Activated T-helper 2 cell treated with anti-CD3 and anti-CD28 coated beads, Interferon-gamma antibody, Interleukin-2, Interleukin-4, amounts not matched to agents 10 μg/mL and 5 μg/mL and 100 μg/mL, durations not matched to agents 14 hours and 24 hours and 36 hours (primary cell): ENCODE measurements at regions of chr2 and their contacts with region 1.

Region 1: DNA sequence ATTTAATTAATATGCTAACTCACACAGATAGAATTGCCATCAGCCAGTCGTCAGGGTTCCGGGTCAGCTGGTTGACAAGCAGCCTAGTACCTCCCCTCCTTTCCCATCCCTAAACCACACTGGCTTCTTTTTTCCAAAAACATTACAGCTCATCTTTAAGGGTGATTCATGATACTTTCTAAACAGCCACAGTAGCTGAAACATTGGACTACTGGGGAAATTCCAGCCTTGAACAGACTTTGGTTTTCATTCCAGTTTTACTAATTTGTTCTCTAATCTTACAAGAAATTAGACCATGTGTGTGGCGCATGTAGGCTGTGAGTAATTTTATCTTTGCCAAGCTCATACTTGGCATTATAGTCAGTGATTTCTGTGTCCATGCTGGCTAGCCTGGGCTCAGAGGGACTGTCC is 110.8 kb downstream of the FMNL2 start:
- DNase-seq: no peak
- H3K4me3 Mint-ChIP-seq: no peak overlapping the region
- H3K27ac Mint-ChIP-seq: no peak overlapping the region
- H3K4me1 Mint-ChIP-seq: peaks cover 22% of the 10 kb centered on the region
- H3K27me3 Mint-ChIP-seq: peaks cover 3% of the 10 kb centered on the region

Region 2: GRCh38 chr2:152415231-152415642 is 30.6 kb before region 1 on chr2:
- intact Hi-C with region 1: loop called (anchors 1 kb)
- DNase-seq: no peak
- H3K4me3 Mint-ChIP-seq: peak overlapping the region; percentile 8
- H3K27ac Mint-ChIP-seq: peak overlapping the region; percentile 88
- H3K4me1 Mint-ChIP-seq: peaks cover 53% of the 10 kb centered on the region
- H3K27me3 Mint-ChIP-seq: peaks cover 2% of the 10 kb centered on the region

Region 3: DNA sequence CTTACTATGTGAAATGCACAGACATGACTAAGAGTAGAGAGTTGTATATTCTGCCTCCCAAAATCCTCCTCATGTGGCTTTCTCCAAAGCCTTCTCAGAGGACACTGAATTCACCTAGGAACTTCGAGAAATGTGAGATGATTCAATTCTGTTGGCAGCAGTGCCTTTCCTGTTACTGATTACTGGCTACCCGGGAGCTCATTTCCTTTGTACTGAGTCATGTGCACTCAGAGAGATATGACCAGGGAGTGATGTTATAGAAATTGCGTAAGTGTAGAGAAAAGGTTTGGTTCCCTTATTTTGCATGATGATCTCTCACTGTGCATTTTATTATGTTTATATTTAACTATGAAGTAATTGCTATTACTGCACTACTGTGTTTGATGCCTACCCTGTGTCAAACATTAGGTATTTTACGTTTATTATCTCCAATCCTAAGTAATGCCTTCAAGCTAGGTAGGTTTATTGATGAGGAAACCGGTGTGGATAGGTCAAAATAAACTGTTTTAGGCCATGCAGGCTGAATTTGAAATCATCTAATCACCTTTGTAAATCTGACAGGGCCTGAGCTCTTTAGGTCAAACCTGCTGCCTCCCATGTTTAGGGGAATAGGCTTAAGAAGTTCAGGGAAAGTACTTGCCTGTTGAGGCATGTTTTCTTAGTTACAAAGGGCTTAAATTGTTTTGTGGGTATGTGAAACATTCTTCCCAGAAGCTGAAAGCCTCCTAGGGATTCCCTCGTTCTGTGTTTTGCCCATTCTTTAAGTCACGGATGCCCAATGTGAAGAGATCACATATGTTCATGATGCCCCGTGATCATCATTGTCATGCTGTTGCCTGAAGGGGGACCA is 24.1 kb before region 1 on chr2:
- intact Hi-C with region 1: loop called (anchors 1 kb)
- DNase-seq: no peak
- H3K4me3 Mint-ChIP-seq: no peak overlapping the region
- H3K27ac Mint-ChIP-seq: peak overlapping the region; percentile 23
- H3K4me1 Mint-ChIP-seq: peaks cover 20% of the 10 kb centered on the region
- H3K27me3 Mint-ChIP-seq: no peaks in the 10 kb centered on the region